Activated CD4-positive, alpha-beta T cell treated with anti-CD3 and anti-CD28 coated beads, Interleukin-2, amount 10 ng/mL, durations not matched to agents 24 days and 14 days (primary cell): ENCODE measurements at regions of chr9 and their contacts with region 1.

Region 1: DNA sequence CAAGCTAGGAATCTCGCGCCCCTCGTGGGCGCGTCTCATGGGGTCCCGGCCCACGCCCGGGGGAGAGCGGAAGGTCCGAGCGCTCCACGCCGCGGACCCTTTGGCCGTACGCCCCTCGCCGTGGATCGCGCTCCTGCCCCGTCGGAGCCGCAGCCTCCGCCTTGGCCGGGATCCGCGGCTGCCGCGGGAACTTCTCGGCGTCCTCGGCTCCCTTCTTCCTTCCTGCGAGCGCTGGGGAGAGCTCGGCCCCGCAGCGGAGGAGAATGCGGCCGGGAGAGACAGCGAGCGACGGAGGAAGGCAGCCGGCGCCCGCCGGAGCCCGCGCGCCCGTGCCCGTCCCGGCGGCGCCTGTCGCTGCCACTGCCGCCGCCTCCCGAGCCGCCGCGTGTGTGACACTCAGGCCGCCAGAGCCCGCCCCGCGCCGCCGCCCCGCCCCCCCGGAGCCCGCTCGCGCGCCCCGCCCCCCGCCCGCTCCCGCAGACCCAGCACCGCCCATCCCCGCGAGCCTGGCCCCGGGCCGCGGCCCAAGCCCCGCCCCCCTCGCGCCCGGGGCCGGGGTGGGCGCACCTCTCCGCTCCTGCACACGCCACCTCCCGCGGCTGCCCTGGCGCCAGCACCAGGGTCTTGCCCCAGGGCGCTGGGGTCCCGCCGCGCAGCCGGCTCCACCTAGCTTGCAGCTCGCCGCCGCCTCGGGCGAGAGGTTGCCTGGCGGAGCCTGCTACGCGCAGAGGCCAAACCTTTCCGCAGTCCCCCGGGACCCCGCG is at the start of gene SHB:
- DNase-seq: peak; percentile 91
- H3K4me3 Mint-ChIP-seq: peak within 1 kb of the TSS; percentile 82
- H3K27ac Mint-ChIP-seq: no peak within 1 kb of the TSS
- H3K4me1 Mint-ChIP-seq: peaks cover 14% of the 10 kb centered on the region
- H3K27me3 Mint-ChIP-seq: peaks cover 46% of the 10 kb centered on the region
- total RNA-seq, gene SHB: 1.6 and 2.1 TPM in 2 replicates

Region 2: GRCh38 chr9:37746848-37747753 is 321.9 kb before region 1 on chr9:
- intact Hi-C with region 1: loop called (anchors 10 kb)
- DNase-seq: peak; percentile 88
- H3K4me3 Mint-ChIP-seq: no peak overlapping the region
- H3K27ac Mint-ChIP-seq: no peak overlapping the region
- H3K4me1 Mint-ChIP-seq: peaks cover 2% of the 10 kb centered on the region
- H3K27me3 Mint-ChIP-seq: no peaks in the 10 kb centered on the region

Region 3: DNA sequence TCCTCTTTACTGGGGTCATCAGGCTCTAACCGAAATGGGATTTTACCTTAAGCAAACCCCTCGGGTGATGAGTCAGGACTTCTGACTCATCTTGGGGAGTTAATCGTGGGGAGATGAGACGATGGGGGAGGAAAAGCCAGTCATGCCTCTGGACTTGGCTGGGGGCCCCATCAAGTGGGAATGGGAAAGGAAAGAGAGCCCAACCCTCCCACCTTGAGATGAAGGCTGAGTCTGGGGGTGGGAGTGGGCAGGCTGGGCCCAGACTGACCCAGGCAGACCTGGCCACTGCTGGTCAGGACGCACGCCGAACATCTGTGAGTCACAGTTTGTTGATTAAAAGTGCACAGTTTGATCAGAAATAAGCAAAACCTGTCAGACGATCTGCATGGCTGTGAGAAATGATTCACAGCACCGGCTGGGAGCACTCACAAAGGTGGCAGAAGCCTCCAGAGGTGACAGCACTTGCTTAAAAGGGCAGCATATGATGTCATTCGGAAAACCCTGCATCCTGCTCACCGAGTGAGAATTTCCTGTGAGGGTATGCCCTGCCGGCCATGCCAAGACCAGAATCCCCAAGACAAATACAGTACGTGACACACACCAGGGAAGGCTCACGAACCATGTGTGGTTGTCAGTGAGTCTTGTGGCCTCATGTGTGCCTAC is 115.1 kb before region 1 on chr9:
- intact Hi-C with region 1: loop called (anchors 2 kb)
- DNase-seq: peak; percentile 69
- H3K4me3 Mint-ChIP-seq: peak overlapping the region; percentile 65
- H3K27ac Mint-ChIP-seq: peak overlapping the region; percentile 97
- H3K4me1 Mint-ChIP-seq: peaks cover 20% of the 10 kb centered on the region
- H3K27me3 Mint-ChIP-seq: no peaks in the 10 kb centered on the region

Region 4: GRCh38 chr9:37994639-37995347 is 74.3 kb before region 1 on chr9:
- intact Hi-C with region 1: loop called (anchors 5 kb)
- DNase-seq: peak; percentile 64
- H3K4me3 Mint-ChIP-seq: peak overlapping the region; percentile 63
- H3K27ac Mint-ChIP-seq: peak overlapping the region; percentile 80
- H3K4me1 Mint-ChIP-seq: peaks cover 19% of the 10 kb centered on the region
- H3K27me3 Mint-ChIP-seq: no peaks in the 10 kb centered on the region

Region 5: DNA sequence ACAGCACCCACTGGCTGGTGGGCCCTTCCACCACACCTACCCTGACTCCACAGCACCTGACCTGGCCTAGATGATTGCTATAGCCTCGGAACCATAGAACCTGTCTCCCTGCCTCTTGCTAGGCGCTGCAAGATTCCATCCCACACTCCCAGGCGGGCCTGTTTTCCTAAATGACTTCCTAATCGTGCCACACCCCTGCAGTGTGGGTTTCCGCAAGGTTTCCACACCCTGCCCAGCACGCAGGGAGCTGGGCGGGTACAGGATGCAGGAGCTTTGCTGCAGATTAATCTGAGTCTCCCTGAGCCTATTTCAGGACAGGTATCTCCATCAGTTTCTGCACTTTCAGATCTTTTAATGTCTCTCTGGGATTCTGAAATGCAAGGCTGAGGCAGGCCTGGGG is 62.9 kb before region 1 on chr9:
- intact Hi-C with region 1: no loop called
- DNase-seq: no peak
- H3K4me3 Mint-ChIP-seq: no peak overlapping the region
- H3K27ac Mint-ChIP-seq: peak overlapping the region; percentile 5
- H3K4me1 Mint-ChIP-seq: peaks cover 24% of the 10 kb centered on the region
- H3K27me3 Mint-ChIP-seq: no peaks in the 10 kb centered on the region

Region 6: DNA sequence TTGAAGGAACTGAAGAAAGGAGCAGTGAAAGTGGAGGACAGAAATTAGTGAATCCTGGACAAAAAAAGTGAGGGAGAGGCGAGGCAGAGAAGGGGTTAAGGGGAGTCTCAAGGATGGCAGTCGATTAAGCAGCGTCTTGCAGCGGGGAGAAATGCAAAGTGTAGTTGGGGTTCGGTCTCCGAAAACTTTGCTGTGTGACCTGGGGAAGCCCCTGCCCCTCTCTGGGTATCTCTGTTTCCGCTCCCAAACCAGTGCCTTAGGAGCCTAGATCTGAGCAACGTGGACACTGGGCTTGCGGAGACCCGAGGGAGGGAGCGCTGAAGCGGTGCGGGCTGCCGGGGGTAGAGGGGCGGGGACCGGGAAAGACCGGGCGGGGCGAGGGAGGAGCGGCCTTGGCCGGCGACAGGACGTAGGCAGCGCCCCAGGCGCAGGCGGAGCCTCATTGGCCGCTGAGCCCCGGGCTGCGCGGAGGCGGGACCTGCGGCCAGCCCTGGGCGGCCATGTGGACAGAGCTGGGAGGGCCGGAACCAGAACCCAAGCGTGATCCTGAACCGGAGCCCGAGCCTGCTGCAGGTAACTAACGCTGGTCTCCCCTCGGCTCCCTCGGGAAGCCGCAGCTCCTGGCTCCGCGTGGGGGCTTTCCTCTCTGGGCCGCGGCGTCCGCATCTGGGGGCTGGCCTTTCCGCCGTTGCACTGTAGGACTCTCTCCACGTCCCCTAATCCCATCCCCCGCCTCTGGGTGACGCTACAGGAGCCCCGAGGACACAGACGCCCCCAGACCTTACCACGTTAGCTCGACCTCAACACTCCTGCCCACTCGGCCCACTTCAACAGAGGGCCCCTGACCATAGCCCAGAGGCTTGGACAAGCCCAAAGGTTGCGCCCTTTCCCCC is 323.4 kb after region 1 on chr9 and contains the start of gene ALDH1B1:
- intact Hi-C with region 1: loop called (anchors 1 kb)
- DNase-seq: peak; percentile 94
- H3K4me3 Mint-ChIP-seq: peak within 1 kb of the TSS; percentile 96
- H3K27ac Mint-ChIP-seq: peak within 1 kb of the TSS; percentile 91
- H3K4me1 Mint-ChIP-seq: peaks cover 17% of the 10 kb centered on the region
- H3K27me3 Mint-ChIP-seq: peaks cover 16% of the 10 kb centered on the region
- total RNA-seq, gene ALDH1B1: 35.2 and 36.5 TPM in 2 replicates